ENCODE measurements at regions of chr1 and their contacts with region 1.

Region 1: DNA sequence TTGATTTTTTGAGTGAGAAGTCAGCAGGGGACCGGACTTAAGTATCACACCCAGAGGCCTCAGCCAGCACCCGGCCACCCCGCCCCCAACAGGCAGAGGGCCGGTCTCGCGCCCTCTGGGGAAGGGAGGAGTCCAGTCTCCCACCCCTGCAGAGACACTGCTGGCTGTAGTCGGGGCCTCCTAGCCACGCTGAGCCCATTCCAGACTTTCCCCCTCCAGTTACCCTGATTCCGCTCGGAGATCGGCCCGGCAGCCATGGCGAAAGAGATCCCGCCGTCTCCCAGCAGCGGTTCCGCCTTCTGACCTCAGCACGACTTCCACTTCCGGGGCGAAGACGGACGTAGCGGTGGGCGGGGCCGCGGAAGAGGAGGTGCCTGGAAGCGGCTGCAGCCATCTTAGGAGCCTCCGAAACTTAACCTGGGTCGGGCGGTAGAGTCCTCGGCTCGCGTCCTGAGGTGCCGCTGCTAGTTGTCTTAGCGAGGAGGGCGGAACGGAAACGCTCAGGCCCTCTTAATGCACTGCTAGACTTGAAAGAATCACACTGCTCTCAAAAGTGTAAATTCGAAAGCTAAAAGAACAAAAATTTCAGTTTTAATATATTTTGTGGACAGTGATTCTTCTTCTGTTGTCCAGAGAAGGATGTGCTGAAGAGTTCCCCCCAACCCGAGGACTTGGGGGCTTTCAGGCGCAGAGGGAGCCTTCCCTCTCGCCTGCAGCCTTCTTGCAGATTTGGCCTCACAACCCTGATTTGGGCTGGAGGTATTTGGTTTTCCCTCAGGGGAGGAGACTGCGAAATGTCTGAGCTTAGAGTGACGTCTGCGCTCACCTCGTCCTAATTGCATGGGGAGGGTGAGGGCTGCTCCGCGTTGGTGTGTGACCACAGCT is at the start of gene SF3B4:
- DNase-seq: peak; percentile 93 to 98 (median 94)
- ATAC-seq: peak; percentile 91
- H3K4me3 ChIP-seq: peak within 1 kb of the TSS; percentile 94
- H3K4me3 Mint-ChIP-seq: peak within 1 kb of the TSS; percentile 98
- H3K27ac ChIP-seq: peak within 1 kb of the TSS; percentile 87 to 93
- H3K27ac Mint-ChIP-seq: peak within 1 kb of the TSS; percentile 99
- H3K4me1 ChIP-seq: peaks cover 28% of the 10 kb centered on the region
- H3K4me1 Mint-ChIP-seq: peaks cover 47% of the 10 kb centered on the region
- H3K27me3 ChIP-seq: no peaks in the 10 kb centered on the region
- H3K27me3 Mint-ChIP-seq: peaks cover 8% of the 10 kb centered on the region
- CTCF ChIP-seq: no peak
- total RNA-seq, gene SF3B4: 38.0 to 38.6 TPM

Region 2: GRCh38 chr1:149844101-149844500 is 83.6 kb before region 1 on chr1:
- CTCF ChIA-PET with region 1: no interaction called
- POLR2A ChIA-PET with region 1: interaction called, 11 read pairs
- intact Hi-C with region 1: no loop called
- DNase-seq: peak in 4 of 14 experiments; percentile 34 to 68 (median 49)
- ATAC-seq: no peak
- H3K4me3 ChIP-seq: peak overlapping the region; percentile 67
- H3K4me3 Mint-ChIP-seq: peak overlapping the region; percentile 89
- H3K27ac ChIP-seq: peak overlapping the region; percentile 55
- H3K27ac Mint-ChIP-seq: peak overlapping the region; percentile 85
- H3K4me1 ChIP-seq: peaks cover 22% of the 10 kb centered on the region
- H3K4me1 Mint-ChIP-seq: peaks cover 58% of the 10 kb centered on the region
- H3K27me3 ChIP-seq: no peaks in the 10 kb centered on the region
- H3K27me3 Mint-ChIP-seq: no peaks in the 10 kb centered on the region
- CTCF ChIP-seq: no peak

Region 3: GRCh38 chr1:149899460-149900293 is 28.1 kb before region 1 on chr1 and contains the start of gene BOLA1:
- CTCF ChIA-PET with region 1: no interaction called
- POLR2A ChIA-PET with region 1: interaction called, 9 read pairs
- intact Hi-C with region 1: loop called (anchors 1 to 2 kb)
- DNase-seq: peak; percentile 62 to 91 (median 75)
- ATAC-seq: peak; percentile 96
- H3K4me3 ChIP-seq: peak within 1 kb of the TSS; percentile 84
- H3K4me3 Mint-ChIP-seq: peak within 1 kb of the TSS; percentile 93
- H3K27ac ChIP-seq: peak within 1 kb of the TSS; percentile 73 to 86
- H3K27ac Mint-ChIP-seq: peak within 1 kb of the TSS; percentile 91
- H3K4me1 ChIP-seq: peaks cover 13% of the 10 kb centered on the region
- H3K4me1 Mint-ChIP-seq: peaks cover 21% of the 10 kb centered on the region
- H3K27me3 ChIP-seq: no peaks in the 10 kb centered on the region
- H3K27me3 Mint-ChIP-seq: no peaks in the 10 kb centered on the region
- CTCF ChIP-seq: no peak
- total RNA-seq, gene BOLA1: 4.6 to 6.4 TPM

Measured in CD4-positive, alpha-beta T cell (primary cell).